PC-9 (cell line): ENCODE measurements at regions of chr4 and their contacts with region 1.

Region 1: GRCh38 chr4:6716018-6716911 is at the start of gene BLOC1S4:
- DNase-seq: peak; percentile 72 to 87
- H3K4me3 ChIP-seq: peak within 1 kb of the TSS; percentile 94
- H3K27ac ChIP-seq: peak within 1 kb of the TSS; percentile 51
- H3K4me1 ChIP-seq: peaks cover 11% of the 10 kb centered on the region
- H3K27me3 ChIP-seq: no peaks in the 10 kb centered on the region
- CTCF ChIP-seq: no peak
- total RNA-seq, gene BLOC1S4: 11.7 and 13.9 TPM in 2 replicates

Region 2: DNA sequence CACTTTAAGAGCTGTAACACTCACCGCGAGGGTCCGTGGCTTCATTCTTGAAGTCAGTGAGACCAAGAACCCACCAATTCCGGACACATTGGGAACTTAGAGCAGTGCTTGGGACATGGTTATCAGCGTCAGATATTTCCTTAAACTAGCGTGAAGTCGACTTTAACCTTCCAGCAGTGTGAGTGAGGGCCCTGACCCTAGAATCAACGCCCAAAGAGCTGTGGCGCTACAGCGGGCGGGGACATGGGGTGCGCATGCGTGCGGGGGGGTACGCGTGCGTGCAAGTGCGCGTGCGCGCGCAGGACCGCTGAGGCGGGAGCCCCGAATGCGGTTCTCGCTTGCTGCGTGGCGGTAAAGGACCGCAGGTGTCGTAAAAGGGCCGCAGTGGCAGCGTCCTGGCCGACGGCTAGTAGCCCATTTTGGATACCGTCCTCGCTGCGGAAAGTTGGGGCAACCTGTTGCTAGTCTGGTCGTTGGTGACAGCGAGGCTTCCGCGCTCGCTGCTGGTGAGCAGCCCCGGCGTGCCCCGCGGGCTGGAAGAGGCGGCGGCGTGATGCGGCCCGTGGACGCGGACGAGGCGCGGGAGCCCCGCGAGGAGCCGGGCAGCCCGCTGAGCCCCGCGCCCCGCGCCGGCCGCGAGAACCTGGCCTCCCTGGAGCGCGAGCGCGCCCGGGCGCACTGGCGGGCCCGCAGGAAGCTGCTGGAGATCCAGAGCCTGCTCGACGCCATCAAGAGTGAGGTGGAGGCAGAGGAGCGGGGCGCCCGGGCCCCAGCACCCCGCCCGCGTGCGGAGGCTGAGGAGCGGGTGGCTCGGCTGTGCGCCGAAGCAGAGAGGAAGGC is 42.4 kb before region 1 on chr4:
- CTCF ChIA-PET with region 1: interaction called, 8 read pairs
- POLR2A ChIA-PET with region 1: interaction called, 3 read pairs
- intact Hi-C with region 1: loop called (anchors 1 kb)
- DNase-seq: peak; percentile 82 to 89
- H3K4me3 ChIP-seq: peak overlapping the region; percentile 62
- H3K27ac ChIP-seq: peak overlapping the region; percentile 76
- H3K4me1 ChIP-seq: peaks cover 24% of the 10 kb centered on the region
- H3K27me3 ChIP-seq: no peaks in the 10 kb centered on the region
- CTCF ChIP-seq: no peak

Region 3: GRCh38 chr4:6763330-6763851 is 47.1 kb after region 1 on chr4:
- CTCF ChIA-PET with region 1: no interaction called
- POLR2A ChIA-PET with region 1: no interaction called
- intact Hi-C with region 1: loop called (anchors 1 kb)
- DNase-seq: peak; percentile 81 to 91
- H3K4me3 ChIP-seq: peak overlapping the region; percentile 47; the same call in 1 of the 2 replicates
- H3K27ac ChIP-seq: peak overlapping the region; percentile 88
- H3K4me1 ChIP-seq: peaks cover 53% of the 10 kb centered on the region
- H3K27me3 ChIP-seq: no peaks in the 10 kb centered on the region
- CTCF ChIP-seq: peak; percentile 56

Region 4: GRCh38 chr4:6783053-6783981 is 67.1 kb after region 1 on chr4:
- CTCF ChIA-PET with region 1: no interaction called
- POLR2A ChIA-PET with region 1: interaction called, 6 read pairs
- intact Hi-C with region 1: loop called (anchors 2 kb)
- DNase-seq: peak; percentile 59 to 91
- H3K4me3 ChIP-seq: peak overlapping the region; percentile 94
- H3K27ac ChIP-seq: peak overlapping the region; percentile 75
- H3K4me1 ChIP-seq: peaks cover 41% of the 10 kb centered on the region
- H3K27me3 ChIP-seq: no peaks in the 10 kb centered on the region
- CTCF ChIP-seq: no peak

Region 5: DNA sequence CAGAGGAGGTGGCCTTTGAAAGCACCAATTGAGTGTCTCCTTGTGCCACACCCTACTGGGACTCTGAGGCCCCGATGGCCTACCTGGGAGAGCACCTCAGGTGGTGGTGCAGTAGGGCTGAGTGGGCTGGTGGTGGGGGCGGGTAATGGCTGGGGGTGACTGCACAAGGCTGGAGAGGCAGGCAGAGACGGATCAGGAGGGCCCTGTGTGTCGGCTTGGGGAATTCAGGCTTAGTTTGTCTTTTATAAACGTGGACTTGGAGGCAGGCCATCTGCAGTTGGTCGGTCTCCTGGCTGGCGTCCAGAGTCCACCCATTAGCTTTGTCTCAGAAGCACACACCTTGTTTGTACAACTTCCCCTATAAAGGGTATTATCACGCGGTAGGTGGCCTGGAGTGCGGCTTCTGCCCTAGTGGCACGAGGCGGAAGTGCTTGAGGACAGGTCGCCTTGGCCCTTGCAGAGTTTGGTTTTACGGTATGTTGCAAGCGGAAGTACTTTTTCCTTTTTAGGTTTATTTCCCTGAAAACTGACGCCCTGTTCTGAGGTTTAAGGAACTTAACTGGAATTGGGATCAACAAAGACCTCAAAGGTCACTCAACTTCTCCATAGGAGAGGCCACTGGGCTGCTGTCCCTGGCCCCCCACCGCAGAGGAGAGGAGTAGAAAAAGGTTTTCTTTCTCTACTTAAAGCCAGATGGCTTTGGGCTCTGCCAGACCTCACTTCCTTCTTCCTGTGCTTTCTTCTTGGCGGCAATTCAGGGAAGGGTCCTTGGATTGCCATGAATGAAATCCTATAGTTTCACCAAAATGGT is 201.4 kb after region 1 on chr4:
- CTCF ChIA-PET with region 1: no interaction called
- POLR2A ChIA-PET with region 1: no interaction called
- intact Hi-C with region 1: loop called (anchors 1 kb)
- DNase-seq: peak; percentile 85 to 92
- H3K4me3 ChIP-seq: peak overlapping the region; percentile 11; the same call in 1 of the 2 replicates
- H3K27ac ChIP-seq: peak overlapping the region; percentile 86
- H3K4me1 ChIP-seq: peaks cover 39% of the 10 kb centered on the region
- H3K27me3 ChIP-seq: no peaks in the 10 kb centered on the region
- CTCF ChIP-seq: peak; percentile 63

Region 6: GRCh38 chr4:7081891-7082471 is 365.7 kb after region 1 on chr4:
- CTCF ChIA-PET with region 1: no interaction called
- POLR2A ChIA-PET with region 1: no interaction called
- intact Hi-C with region 1: loop called (anchors 2 kb)
- DNase-seq: peak; percentile 62 to 73
- H3K4me3 ChIP-seq: no peak overlapping the region
- H3K27ac ChIP-seq: no peak overlapping the region
- H3K4me1 ChIP-seq: no peaks in the 10 kb centered on the region
- H3K27me3 ChIP-seq: no peaks in the 10 kb centered on the region
- CTCF ChIP-seq: peak; percentile 66